Caco-2 (cell line): ENCODE measurements at regions of chr22 and their contacts with region 1.

Region 1: GRCh38 chr22:47094861-47095330 is 332.4 kb downstream of the TBC1D22A start:
- DNase-seq: no peak
- H3K4me3 ChIP-seq: no peak overlapping the region
- H3K4me3 Mint-ChIP-seq: no peak overlapping the region
- H3K27ac Mint-ChIP-seq: no peak overlapping the region
- H3K4me1 ChIP-seq: peaks cover 4% of the 10 kb centered on the region; the same call in 1 of the 2 replicates
- H3K4me1 Mint-ChIP-seq: peaks cover 2% of the 10 kb centered on the region
- H3K27me3 ChIP-seq: no peaks in the 10 kb centered on the region
- H3K27me3 Mint-ChIP-seq: no peaks in the 10 kb centered on the region
- CTCF ChIP-seq: no peak

Region 2: DNA sequence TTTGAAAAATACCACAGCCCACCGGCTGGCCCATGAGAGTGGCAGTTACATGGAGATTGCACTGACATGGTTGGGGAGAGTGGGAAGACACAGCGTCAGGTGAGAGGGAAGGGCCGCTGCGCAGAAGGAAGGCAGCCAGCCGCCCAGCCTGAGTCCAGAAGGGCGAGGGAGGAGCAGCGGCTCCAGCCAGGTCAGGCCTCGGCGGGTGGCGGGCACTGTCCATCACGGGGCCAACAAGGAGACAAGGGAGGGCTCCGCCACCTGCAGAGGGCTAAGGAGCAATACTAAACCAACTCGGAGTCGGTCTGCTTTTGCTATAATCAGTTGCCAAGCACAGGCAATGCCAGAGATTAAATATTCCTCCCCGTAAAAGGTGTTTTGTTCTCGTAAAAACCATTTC is 52.0 kb after region 1 on chr22:
- CTCF ChIA-PET with region 1: no interaction called
- POLR2A ChIA-PET with region 1: no interaction called
- intact Hi-C with region 1: loop called (anchors 1 kb)
- DNase-seq: no peak
- H3K4me3 ChIP-seq: no peak overlapping the region
- H3K4me3 Mint-ChIP-seq: no peak overlapping the region
- H3K27ac Mint-ChIP-seq: no peak overlapping the region
- H3K4me1 ChIP-seq: no peaks in the 10 kb centered on the region
- H3K4me1 Mint-ChIP-seq: no peaks in the 10 kb centered on the region
- H3K27me3 ChIP-seq: no peaks in the 10 kb centered on the region
- H3K27me3 Mint-ChIP-seq: no peaks in the 10 kb centered on the region
- CTCF ChIP-seq: no peak